ENCODE measurements at regions of chr3 and their contacts with region 1.

Region 1: DNA sequence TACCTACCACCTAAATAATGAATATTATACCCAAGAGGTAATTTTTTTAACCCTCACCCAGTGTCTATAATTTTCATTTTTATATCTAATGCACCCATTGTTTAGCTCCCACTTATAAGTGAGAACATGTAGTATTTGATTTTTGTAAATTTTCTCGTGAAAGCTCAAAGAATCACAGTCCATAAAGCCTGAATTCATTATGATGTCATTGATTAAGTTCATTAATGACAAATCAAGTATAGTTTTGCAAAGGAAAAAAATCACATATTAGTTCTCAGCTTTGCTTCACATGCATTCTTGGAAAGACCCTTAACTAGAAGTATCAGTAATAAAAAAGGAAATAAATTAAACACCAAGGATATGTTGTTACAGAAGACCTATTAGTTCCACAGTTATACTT is 425.3 kb upstream of the UBE2E2 start:
- DNase-seq: no peak
- H3K4me3 ChIP-seq: no peak overlapping the region
- H3K27ac ChIP-seq: no peak overlapping the region
- H3K4me1 ChIP-seq: no peaks in the 10 kb centered on the region
- H3K27me3 ChIP-seq: no peaks in the 10 kb centered on the region
- CTCF ChIP-seq: no peak
- EP300 ChIP-seq: no peak
- POLR2A ChIP-seq: no peak
- RAD21 ChIP-seq: no peak

Region 2: GRCh38 chr3:22792533-22792932 is 14.7 kb after region 1 on chr3:
- CTCF ChIA-PET with region 1: interaction called, 10 read pairs
- POLR2A ChIA-PET with region 1: no interaction called
- DNase-seq: no peak
- H3K4me3 ChIP-seq: no peak overlapping the region
- H3K27ac ChIP-seq: no peak overlapping the region
- H3K4me1 ChIP-seq: no peaks in the 10 kb centered on the region
- H3K27me3 ChIP-seq: no peaks in the 10 kb centered on the region
- CTCF ChIP-seq: no peak
- EP300 ChIP-seq: no peak
- POLR2A ChIP-seq: no peak
- RAD21 ChIP-seq: no peak

Region 3: DNA sequence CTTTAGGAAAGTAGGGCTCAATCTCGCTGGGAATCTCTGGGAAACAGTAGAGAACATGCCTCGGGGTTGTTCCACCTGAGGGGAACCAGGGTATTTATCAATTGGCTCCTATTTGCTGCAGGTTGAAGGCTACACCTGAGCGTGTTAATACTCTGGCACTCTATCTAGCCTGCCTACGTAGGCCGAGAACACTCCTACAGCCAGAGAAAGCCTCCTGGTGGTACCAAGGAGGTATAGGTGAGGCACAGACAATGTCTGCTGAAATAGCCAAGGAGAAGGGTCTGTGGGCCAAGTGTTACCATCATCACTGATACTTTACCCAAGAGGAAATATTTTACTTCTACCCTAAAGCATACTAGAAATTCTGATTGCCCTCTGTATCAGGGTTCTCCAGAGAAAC is 84.3 kb after region 1 on chr3:
- CTCF ChIA-PET with region 1: no interaction called
- POLR2A ChIA-PET with region 1: no interaction called
- DNase-seq: no peak
- H3K4me3 ChIP-seq: no peak overlapping the region
- H3K27ac ChIP-seq: no peak overlapping the region
- H3K4me1 ChIP-seq: no peaks in the 10 kb centered on the region
- H3K27me3 ChIP-seq: no peaks in the 10 kb centered on the region
- CTCF ChIP-seq: peak; percentile 44 to 73 (median 63)
- EP300 ChIP-seq: no peak
- POLR2A ChIP-seq: no peak
- RAD21 ChIP-seq: peak; percentile 49 to 63